ENCODE measurements at regions of chr2 and their contacts with region 1.

Region 1: GRCh38 chr2:46351750-46352138 is 54.5 kb downstream of the EPAS1 start:
- DNase-seq: peak in 8 of 9 donors; percentile 54 to 85 (median 76)
- ATAC-seq: peak; percentile 80
- H3K4me3 ChIP-seq: peak overlapping the region; percentile 56
- H3K4me3 Mint-ChIP-seq: peak overlapping the region; percentile 72 to 93 (median 83)
- H3K27ac ChIP-seq: peak overlapping the region; percentile 46
- H3K27ac Mint-ChIP-seq: peak overlapping the region; percentile 81 to 97 (median 91)
- H3K4me1 ChIP-seq: peaks cover 29 to 70% of the 10 kb centered on the region in 2 donors
- H3K4me1 Mint-ChIP-seq: peaks cover 43 to 99% (median 91%) of the 10 kb centered on the region in 7 donors
- H3K27me3 ChIP-seq: no peaks in the 10 kb centered on the region
- H3K27me3 Mint-ChIP-seq: no peaks in the 10 kb centered on the region

Region 2: GRCh38 chr2:46187112-46187618 is 164.6 kb before region 1 on chr2:
- CTCF ChIA-PET with region 1: no interaction called
- POLR2A ChIA-PET with region 1: no interaction called
- intact Hi-C with region 1: loop called in 1 of 2 experiments (anchors 5 kb)
- DNase-seq: peak in 6 of 9 donors; percentile 9 to 44 (median 32)
- ATAC-seq: peak; percentile 38
- H3K4me3 ChIP-seq: peak overlapping the region; percentile 25
- H3K4me3 Mint-ChIP-seq: peak overlapping the region in 9 of 10 donors; percentile 42 to 76 (median 70)
- H3K27ac ChIP-seq: peak overlapping the region; percentile 32
- H3K27ac Mint-ChIP-seq: peak overlapping the region; percentile 72 to 95 (median 84)
- H3K4me1 ChIP-seq: peaks cover 4 to 5% of the 10 kb centered on the region in 2 donors
- H3K4me1 Mint-ChIP-seq: peaks cover 4 to 19% (median 14%) of the 10 kb centered on the region in 7 donors
- H3K27me3 ChIP-seq: no peaks in the 10 kb centered on the region
- H3K27me3 Mint-ChIP-seq: peaks cover 0 to 3% (median 0%) of the 10 kb centered on the region in 5 donors

Region 3: DNA sequence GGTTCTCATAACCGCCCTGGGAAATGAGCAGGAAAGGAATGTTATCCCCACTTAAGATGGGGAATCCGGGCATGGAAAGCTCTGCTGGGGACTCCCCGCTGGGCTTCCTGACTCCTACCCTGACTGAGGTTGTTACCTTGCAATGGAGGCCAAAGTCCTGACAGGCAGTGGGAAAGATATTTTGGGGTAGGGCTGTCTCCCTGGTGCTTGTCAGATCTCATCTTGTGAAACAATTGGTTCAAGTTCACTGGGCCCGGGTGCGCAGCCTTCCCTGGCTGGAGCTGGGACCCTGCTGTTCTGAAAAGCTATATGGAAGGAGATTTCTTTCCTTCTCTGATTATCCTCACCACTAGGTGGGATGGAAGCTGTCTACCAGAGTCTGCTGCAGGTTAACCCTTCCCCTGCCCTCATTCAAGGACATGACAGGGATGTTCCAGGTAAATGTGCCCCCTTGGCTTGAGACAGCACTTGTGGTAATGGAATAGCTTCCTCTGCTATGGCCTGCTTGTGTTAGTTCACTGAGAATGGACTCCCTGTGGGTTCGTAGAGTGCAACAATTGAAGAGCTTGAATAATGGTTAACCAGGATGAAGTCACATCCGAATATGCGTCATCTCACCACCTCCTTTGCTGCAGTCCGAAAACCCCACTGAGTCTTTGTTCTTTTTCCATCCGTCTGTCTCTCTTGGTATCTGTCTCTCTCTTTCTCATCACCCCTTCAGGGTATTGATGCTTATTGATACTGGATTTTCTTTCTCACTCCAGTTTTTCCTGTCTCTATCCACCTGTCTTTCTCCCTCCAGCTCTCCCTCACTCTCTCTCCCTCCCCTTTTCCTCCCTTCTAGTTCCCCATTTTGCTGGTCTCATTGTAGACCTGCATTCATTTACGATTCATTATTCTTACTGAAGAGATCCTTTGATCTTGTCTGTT is 122.3 kb before region 1 on chr2:
- CTCF ChIA-PET with region 1: no interaction called
- POLR2A ChIA-PET with region 1: no interaction called
- intact Hi-C with region 1: loop called in 1 of 2 experiments (anchors 5 kb)
- DNase-seq: no peak
- ATAC-seq: peak; percentile 46
- H3K4me3 ChIP-seq: no peak overlapping the region
- H3K4me3 Mint-ChIP-seq: peak overlapping the region in 1 of 10 donors; percentile 58
- H3K27ac ChIP-seq: no peak overlapping the region
- H3K27ac Mint-ChIP-seq: peak overlapping the region in 3 of 9 donors; percentile 13 to 91 (median 58)
- H3K4me1 ChIP-seq: peaks cover 0 to 4% of the 10 kb centered on the region in 2 donors
- H3K4me1 Mint-ChIP-seq: peaks cover 0 to 39% (median 10%) of the 10 kb centered on the region in 7 donors
- H3K27me3 ChIP-seq: no peaks in the 10 kb centered on the region
- H3K27me3 Mint-ChIP-seq: peaks cover 0 to 24% (median 0%) of the 10 kb centered on the region in 5 donors

Region 4: GRCh38 chr2:46304635-46305034 is 47.1 kb before region 1 on chr2:
- CTCF ChIA-PET with region 1: no interaction called
- POLR2A ChIA-PET with region 1: no interaction called
- intact Hi-C with region 1: loop called in 1 of 2 experiments (anchors 2 kb)
- DNase-seq: peak in 6 of 9 donors; percentile 31 to 66 (median 50)
- ATAC-seq: peak; percentile 73
- H3K4me3 ChIP-seq: peak overlapping the region; percentile 20
- H3K4me3 Mint-ChIP-seq: peak overlapping the region; percentile 63 to 85 (median 73)
- H3K27ac ChIP-seq: no peak overlapping the region
- H3K27ac Mint-ChIP-seq: peak overlapping the region in 1 of 9 donors; percentile 69
- H3K4me1 ChIP-seq: peaks cover 16 to 23% of the 10 kb centered on the region in 2 donors
- H3K4me1 Mint-ChIP-seq: peaks cover 15 to 48% (median 41%) of the 10 kb centered on the region in 7 donors
- H3K27me3 ChIP-seq: peaks cover 11 to 15% of the 10 kb centered on the region in 2 donors
- H3K27me3 Mint-ChIP-seq: peaks cover 34 to 85% (median 63%) of the 10 kb centered on the region in 5 donors

Region 5: GRCh38 chr2:46336283-46336959 is 15.3 kb before region 1 on chr2:
- CTCF ChIA-PET with region 1: interaction called, 7 read pairs
- POLR2A ChIA-PET with region 1: interaction called, 7 read pairs
- intact Hi-C with region 1: loop called in 1 of 2 experiments (anchors 1 kb)
- DNase-seq: no peak
- ATAC-seq: no peak
- H3K4me3 ChIP-seq: no peak overlapping the region
- H3K4me3 Mint-ChIP-seq: peak overlapping the region in 1 of 10 donors; percentile 31
- H3K27ac ChIP-seq: no peak overlapping the region
- H3K27ac Mint-ChIP-seq: no peak overlapping the region
- H3K4me1 ChIP-seq: peaks cover 0 to 10% of the 10 kb centered on the region in 2 donors
- H3K4me1 Mint-ChIP-seq: peaks cover 6 to 36% (median 29%) of the 10 kb centered on the region in 7 donors
- H3K27me3 ChIP-seq: no peaks in the 10 kb centered on the region
- H3K27me3 Mint-ChIP-seq: peaks cover 0 to 19% (median 7%) of the 10 kb centered on the region in 5 donors

Measured in naive thymus-derived CD4-positive, alpha-beta T cell (primary cell).